ENCODE measurements at regions of chr1 and their contacts with region 1.

Region 1: DNA sequence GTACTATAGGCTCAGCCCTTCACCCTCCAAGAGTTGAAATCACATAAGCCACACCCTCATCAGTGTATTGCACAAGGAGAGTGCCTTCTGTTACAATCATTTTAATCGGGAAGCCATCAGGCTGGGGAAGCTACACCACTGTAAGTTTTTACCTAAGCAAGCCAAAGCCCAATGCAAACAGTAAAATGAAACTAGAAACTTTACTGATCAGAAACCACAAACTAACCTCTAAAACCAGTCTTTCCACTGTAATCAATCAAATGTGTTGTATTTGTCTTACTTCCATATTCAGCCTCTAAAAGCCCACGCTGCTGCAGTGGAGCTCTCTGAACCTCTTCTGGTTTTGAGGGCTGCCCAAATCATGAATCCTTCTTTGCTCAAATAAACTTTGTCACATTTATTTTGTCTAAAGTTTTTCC is 26.2 kb downstream of the CAPN8 start:
- DNase-seq: peak; percentile 62
- H3K4me3 Mint-ChIP-seq: peak overlapping the region; percentile 8
- H3K27ac Mint-ChIP-seq: peak overlapping the region; percentile 64
- H3K4me1 Mint-ChIP-seq: peaks cover 63% of the 10 kb centered on the region
- H3K27me3 Mint-ChIP-seq: no peaks in the 10 kb centered on the region
- CTCF ChIP-seq: no peak

Region 2: DNA sequence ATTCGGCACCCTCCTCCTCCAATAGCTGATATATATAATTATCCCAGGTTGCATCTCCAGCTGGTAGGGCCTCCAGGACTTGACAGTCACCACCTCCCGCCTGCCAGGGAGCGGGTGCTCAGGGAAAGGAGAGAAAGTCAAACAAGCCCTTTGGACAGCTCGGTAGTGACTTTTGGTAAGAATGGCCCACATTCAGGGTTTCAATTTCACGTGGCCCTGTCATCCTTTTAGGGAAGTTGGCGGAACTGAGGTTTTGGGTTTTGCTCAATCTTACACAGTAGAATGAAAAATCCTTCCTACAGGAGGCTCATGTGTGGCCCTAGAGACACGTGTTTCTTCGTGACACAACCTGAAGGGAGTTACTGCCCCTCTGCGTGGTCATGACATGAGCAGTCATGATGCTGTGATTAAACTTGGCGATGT is 18.0 kb before region 1 on chr1:
- CTCF ChIA-PET with region 1: no interaction called
- intact Hi-C with region 1: no loop called
- DNase-seq: no peak
- H3K4me3 Mint-ChIP-seq: no peak overlapping the region
- H3K27ac Mint-ChIP-seq: no peak overlapping the region
- H3K4me1 Mint-ChIP-seq: peaks cover 11% of the 10 kb centered on the region
- H3K27me3 Mint-ChIP-seq: no peaks in the 10 kb centered on the region
- CTCF ChIP-seq: no peak

Region 3: GRCh38 chr1:223654083-223654482 is 14.7 kb after region 1 on chr1:
- CTCF ChIA-PET with region 1: interaction called, 3 read pairs
- intact Hi-C with region 1: loop called (anchors 2 kb)
- DNase-seq: no peak
- H3K4me3 Mint-ChIP-seq: peak overlapping the region; percentile 21
- H3K27ac Mint-ChIP-seq: peak overlapping the region; percentile 58
- H3K4me1 Mint-ChIP-seq: peaks cover 56% of the 10 kb centered on the region
- H3K27me3 Mint-ChIP-seq: no peaks in the 10 kb centered on the region
- CTCF ChIP-seq: no peak

Region 4: DNA sequence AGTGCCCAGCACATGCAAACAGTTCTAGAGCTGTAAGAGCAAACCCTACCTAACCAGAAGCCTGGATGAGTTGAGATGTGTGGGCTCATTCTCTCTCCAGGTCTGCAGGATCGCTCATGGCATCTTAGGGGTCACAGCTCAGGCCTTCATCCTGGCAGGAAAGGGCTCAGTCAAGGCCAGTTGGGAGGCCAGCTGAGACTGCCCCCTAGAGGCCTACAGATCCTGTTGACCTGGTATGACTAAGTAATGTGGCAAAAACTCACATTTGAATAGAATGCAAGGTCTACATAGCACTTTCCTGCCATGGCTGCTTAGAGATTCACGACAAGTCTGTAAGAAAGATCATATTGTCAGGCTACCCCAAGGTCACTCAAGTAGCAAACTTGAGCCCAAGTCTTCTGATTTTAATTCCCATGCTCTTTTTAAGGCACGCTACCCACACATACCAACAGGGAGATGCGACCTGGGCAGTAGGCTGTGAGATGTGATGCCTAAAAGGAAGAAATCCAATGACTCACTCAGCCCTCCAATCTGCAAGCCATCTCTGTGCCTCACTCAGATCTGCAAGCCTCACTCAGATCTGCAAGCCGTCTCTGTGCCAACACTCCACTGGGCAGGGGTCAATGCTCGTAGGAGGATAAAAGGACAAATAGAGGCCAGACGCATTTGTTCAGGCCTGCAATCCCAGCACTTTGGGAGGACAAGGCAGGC is 31.3 kb after region 1 on chr1:
- CTCF ChIA-PET with region 1: interaction called, 6 read pairs
- intact Hi-C with region 1: loop called (anchors 2 kb)
- DNase-seq: peak; percentile 70
- H3K4me3 Mint-ChIP-seq: no peak overlapping the region
- H3K27ac Mint-ChIP-seq: no peak overlapping the region
- H3K4me1 Mint-ChIP-seq: peaks cover 42% of the 10 kb centered on the region
- H3K27me3 Mint-ChIP-seq: no peaks in the 10 kb centered on the region
- CTCF ChIP-seq: peak; percentile 88